CD4-positive, alpha-beta T cell (primary cell): ENCODE measurements at regions of chr1 and their contacts with region 1.

Region 1: GRCh38 chr1:221435504-221435904 is 306.4 kb downstream of the DUSP10 start:
- DNase-seq: peak in 3 of 14 experiments; percentile 54 to 58 (median 57)
- ATAC-seq: peak; percentile 56
- H3K4me3 ChIP-seq: no peak overlapping the region
- H3K4me3 Mint-ChIP-seq: no peak overlapping the region
- H3K27ac ChIP-seq: no peak overlapping the region
- H3K27ac Mint-ChIP-seq: no peak overlapping the region
- H3K4me1 ChIP-seq: peaks cover 8% of the 10 kb centered on the region
- H3K4me1 Mint-ChIP-seq: peaks cover 19% of the 10 kb centered on the region
- H3K27me3 ChIP-seq: no peaks in the 10 kb centered on the region
- H3K27me3 Mint-ChIP-seq: peaks cover 9% of the 10 kb centered on the region
- CTCF ChIP-seq: peak; percentile 93

Region 2: DNA sequence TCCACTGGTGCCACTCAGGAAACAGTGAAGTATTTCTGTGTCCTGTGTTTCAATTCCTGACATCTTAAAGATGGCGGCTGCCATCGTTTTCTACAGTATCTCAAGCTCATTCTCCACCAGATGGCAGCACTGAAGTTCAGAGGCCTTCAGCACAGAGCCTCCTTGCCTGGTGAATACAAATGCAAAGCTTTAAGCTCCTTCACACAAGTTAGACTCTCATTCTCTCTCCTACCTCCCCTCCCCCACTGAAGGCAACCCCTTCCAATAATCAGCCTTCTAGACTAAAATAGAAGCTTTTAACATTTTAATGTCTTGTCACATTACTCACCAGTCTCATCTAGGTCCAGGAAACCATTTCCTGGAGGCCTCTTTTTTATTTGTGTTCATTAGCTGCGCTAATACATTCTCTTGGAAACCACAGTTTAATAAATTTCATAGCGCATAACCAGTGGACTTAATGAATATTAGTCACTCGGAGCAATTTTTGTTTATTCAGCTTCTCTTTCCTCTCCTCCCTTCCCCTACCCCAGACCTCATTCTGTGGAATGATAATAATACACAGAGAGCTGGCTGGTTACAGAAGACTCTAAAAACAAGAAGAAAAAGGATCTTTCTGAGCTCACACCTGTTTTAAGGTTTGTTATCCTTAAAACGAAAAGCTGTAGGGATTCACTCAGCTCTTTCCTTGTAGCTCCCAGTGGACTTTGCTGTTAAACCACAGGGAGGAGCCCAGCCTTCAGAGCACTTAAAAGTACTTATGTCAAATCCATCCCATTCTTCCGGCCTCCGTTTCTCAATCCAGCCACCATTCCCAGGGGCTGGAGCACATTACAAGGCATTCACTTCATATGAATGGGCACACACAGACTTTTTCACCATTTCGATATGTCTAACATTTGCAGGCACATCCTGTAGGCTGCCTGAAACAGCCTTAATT is 171.4 kb before region 1 on chr1:
- CTCF ChIA-PET with region 1: no interaction called
- POLR2A ChIA-PET with region 1: no interaction called
- intact Hi-C with region 1: loop called in 1 of 2 experiments (anchors 10 kb)
- DNase-seq: peak in 8 of 14 experiments; percentile 2 to 53 (median 10)
- ATAC-seq: peak; percentile 32
- H3K4me3 ChIP-seq: no peak overlapping the region
- H3K4me3 Mint-ChIP-seq: no peak overlapping the region
- H3K27ac ChIP-seq: no peak overlapping the region
- H3K27ac Mint-ChIP-seq: no peak overlapping the region
- H3K4me1 ChIP-seq: no peaks in the 10 kb centered on the region
- H3K4me1 Mint-ChIP-seq: no peaks in the 10 kb centered on the region
- H3K27me3 ChIP-seq: no peaks in the 10 kb centered on the region
- H3K27me3 Mint-ChIP-seq: peaks cover 5% of the 10 kb centered on the region
- CTCF ChIP-seq: no peak